ENCODE measurements at regions of chr21 and their contacts with region 1.

Region 1: DNA sequence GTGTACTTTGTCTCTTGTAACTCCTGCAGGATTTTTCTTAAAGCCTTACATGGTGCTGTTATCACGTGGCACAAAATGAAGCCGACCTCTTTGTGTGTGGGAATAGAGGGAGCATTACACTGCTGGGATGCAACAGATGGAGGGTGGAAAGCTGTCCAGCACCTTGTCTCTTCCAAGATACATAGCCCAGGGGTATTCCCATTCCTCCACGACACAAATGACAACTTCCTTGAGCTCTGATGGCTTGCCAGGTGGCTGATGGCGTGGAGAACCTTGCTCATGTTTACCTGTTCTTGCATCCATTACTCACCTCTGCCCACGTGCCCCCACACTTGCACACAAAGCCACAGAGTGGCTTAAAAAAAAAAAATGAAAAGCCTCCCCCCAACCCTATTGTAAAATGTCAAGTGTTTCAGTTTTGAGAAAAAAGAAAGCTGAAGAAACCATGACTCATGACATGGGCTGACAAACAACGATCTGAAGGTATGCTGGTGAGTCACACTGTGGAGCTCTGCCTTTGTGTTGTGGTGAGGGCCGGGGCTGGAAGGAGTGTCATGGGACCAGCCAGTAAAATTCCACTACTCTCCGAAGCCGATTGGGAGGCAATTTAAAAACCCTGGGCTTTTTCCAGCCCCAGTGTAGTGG is 32.0 kb upstream of the ATP5PO start:
- DNase-seq: peak; percentile 71 to 83 (median 72)
- ATAC-seq: peak; percentile 92 to 97
- H3K4me3 ChIP-seq: no peak overlapping the region
- H3K27ac ChIP-seq: peak overlapping the region; percentile 47
- H3K4me1 ChIP-seq: peaks cover 17% of the 10 kb centered on the region
- H3K27me3 ChIP-seq: no peaks in the 10 kb centered on the region

Region 2: DNA sequence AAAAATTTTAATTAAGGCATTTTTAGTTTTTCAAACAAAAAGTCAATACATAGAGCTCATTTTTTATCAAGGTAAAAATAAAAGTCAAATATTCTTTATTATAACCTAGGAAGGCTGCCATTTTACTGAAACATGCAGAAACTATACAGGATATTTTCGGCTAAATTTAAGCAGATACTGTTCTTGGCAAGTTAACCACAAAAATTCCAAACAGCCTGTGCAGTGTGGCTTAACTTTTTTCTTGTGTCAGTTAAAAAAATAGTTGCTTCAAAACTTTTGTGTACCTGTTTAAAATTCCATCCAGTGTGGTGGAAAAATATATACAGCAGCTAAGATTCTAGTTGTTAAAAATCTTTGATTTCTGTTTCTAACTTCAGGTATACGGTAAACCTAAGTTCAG is 166.9 kb before region 1 on chr21:
- intact Hi-C with region 1: no loop called
- DNase-seq: no peak
- ATAC-seq: no peak
- H3K4me3 ChIP-seq: no peak overlapping the region
- H3K27ac ChIP-seq: no peak overlapping the region
- H3K4me1 ChIP-seq: no peaks in the 10 kb centered on the region
- H3K27me3 ChIP-seq: no peaks in the 10 kb centered on the region

Region 3: DNA sequence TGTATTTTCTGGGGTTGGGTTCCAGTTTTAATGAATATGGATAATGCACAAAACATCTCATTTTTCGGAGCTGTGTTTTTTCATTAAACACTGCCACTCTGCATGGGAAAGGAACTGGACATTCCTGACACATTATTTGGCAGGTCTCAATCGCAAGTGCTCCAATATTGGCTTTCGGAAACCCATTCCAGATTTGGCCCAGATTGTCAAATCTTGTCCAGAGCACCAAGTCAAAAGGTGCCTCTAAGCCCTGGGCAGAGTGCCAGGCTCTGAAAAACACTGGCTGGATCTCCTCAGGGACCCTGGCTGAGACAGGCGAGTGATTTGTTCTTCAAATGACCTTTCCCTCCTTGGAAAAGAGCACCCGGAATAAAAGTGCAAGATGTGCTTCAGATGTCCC is 57.4 kb after region 1 on chr21:
- intact Hi-C with region 1: loop called in 1 of 4 experiments (anchors 10 kb)
- DNase-seq: peak; percentile 69 to 90 (median 83)
- ATAC-seq: peak; percentile 63 to 76
- H3K4me3 ChIP-seq: no peak overlapping the region
- H3K27ac ChIP-seq: peak overlapping the region; percentile 40
- H3K4me1 ChIP-seq: peaks cover 4% of the 10 kb centered on the region
- H3K27me3 ChIP-seq: no peaks in the 10 kb centered on the region

Region 4: GRCh38 chr21:34073032-34073869 is 125.7 kb after region 1 on chr21 and contains the starts of genes MRPS6 and SLC5A3:
- intact Hi-C with region 1: loop called in 2 of 4 experiments (anchors 10 kb)
- DNase-seq: peak; percentile 88 to 95 (median 94)
- ATAC-seq: peak; percentile 90 to 92
- H3K4me3 ChIP-seq: peak within 1 kb of the TSS; percentile 68
- H3K27ac ChIP-seq: peak within 1 kb of the TSS; percentile 76
- H3K4me1 ChIP-seq: peaks cover 7% of the 10 kb centered on the region
- H3K27me3 ChIP-seq: no peaks in the 10 kb centered on the region
- total RNA-seq, gene MRPS6: 67.6 to 78.1 (median 73.1) TPM
- total RNA-seq, gene SLC5A3: 4.1 to 11.7 (median 6.7) TPM

Measured in right cardiac atrium (tissue), 5 donors.